Activated B cell treated with CpG ODN at 0.5 μM for 24 hours (primary cell): ENCODE measurements at regions of chr6 and their contacts with region 1.

Region 1: GRCh38 chr6:4775584-4776494 is at the start of gene CDYL:
- DNase-seq: peak; percentile 96
- ATAC-seq: peak; percentile 77
- H3K4me3 Mint-ChIP-seq: peak within 1 kb of the TSS; percentile 90
- H3K27ac Mint-ChIP-seq: peak within 1 kb of the TSS; percentile 85
- H3K4me1 Mint-ChIP-seq: peaks cover 46% of the 10 kb centered on the region
- H3K27me3 Mint-ChIP-seq: no peaks in the 10 kb centered on the region
- CTCF ChIP-seq: no peak
- total RNA-seq, gene CDYL: 47.5 and 49.8 TPM in 2 replicates

Region 2: GRCh38 chr6:3800850-3801591 is 974.8 kb before region 1 on chr6:
- CTCF ChIA-PET with region 1: no interaction called
- POLR2A ChIA-PET with region 1: no interaction called
- intact Hi-C with region 1: loop called (anchors 5 kb)
- DNase-seq: no peak
- ATAC-seq: no peak
- H3K4me3 Mint-ChIP-seq: no peak overlapping the region
- H3K27ac Mint-ChIP-seq: no peak overlapping the region
- H3K4me1 Mint-ChIP-seq: peaks cover 53% of the 10 kb centered on the region
- H3K27me3 Mint-ChIP-seq: no peaks in the 10 kb centered on the region
- CTCF ChIP-seq: no peak

Region 3: DNA sequence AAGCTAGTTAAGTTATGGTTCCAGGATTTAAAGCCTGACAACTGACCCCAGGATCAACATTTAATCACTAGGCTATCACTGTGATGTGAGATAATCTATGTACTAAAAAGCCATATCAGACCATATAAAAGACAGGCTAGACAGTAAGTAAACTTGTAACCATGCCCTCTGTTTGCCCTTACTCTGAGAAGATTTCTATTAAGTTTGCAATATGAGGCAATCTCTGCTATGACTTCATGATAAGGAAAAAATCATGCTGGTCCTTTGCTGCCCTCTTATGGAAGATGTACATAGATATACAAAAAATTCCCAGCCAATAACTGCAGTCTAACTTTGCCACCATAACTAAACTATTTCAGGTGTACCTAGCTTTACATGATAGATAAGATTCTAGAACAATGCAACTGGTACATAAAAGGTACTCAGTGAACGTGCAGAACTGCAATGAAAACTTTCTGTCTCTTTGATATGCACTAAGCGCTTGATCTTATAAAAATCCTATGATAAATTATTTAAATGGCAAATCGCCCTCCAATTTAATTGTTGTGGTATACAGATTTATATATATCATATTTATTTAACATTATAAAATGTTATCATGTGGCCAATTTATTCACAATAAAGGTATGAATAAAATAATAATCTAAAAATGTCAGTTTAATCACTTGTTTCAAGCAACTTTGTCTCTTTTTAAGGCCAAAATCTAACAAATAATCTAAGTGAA is 767.4 kb before region 1 on chr6:
- CTCF ChIA-PET with region 1: no interaction called
- POLR2A ChIA-PET with region 1: no interaction called
- intact Hi-C with region 1: no loop called
- DNase-seq: no peak
- ATAC-seq: peak; percentile 49
- H3K4me3 Mint-ChIP-seq: no peak overlapping the region
- H3K27ac Mint-ChIP-seq: no peak overlapping the region
- H3K4me1 Mint-ChIP-seq: peaks cover 25% of the 10 kb centered on the region
- H3K27me3 Mint-ChIP-seq: no peaks in the 10 kb centered on the region
- CTCF ChIP-seq: no peak

Region 4: GRCh38 chr6:4281341-4282293 is 494.2 kb before region 1 on chr6:
- CTCF ChIA-PET with region 1: no interaction called
- POLR2A ChIA-PET with region 1: interaction called, 7 read pairs
- intact Hi-C with region 1: loop called (anchors 1 kb)
- DNase-seq: peak; percentile 60
- ATAC-seq: peak; percentile 97
- H3K4me3 Mint-ChIP-seq: peak overlapping the region; percentile 73
- H3K27ac Mint-ChIP-seq: peak overlapping the region; percentile 76
- H3K4me1 Mint-ChIP-seq: peaks cover 18% of the 10 kb centered on the region
- H3K27me3 Mint-ChIP-seq: peaks cover 26% of the 10 kb centered on the region
- CTCF ChIP-seq: no peak

Region 5: GRCh38 chr6:4788953-4789584 is 13.2 kb after region 1 on chr6:
- CTCF ChIA-PET with region 1: interaction called, 4 read pairs
- POLR2A ChIA-PET with region 1: interaction called, 17 read pairs
- intact Hi-C with region 1: loop called (anchors 1 kb)
- DNase-seq: peak; percentile 50
- ATAC-seq: peak; percentile 99
- H3K4me3 Mint-ChIP-seq: peak overlapping the region; percentile 63
- H3K27ac Mint-ChIP-seq: peak overlapping the region; percentile 39
- H3K4me1 Mint-ChIP-seq: peaks cover 51% of the 10 kb centered on the region
- H3K27me3 Mint-ChIP-seq: no peaks in the 10 kb centered on the region
- CTCF ChIP-seq: no peak

Region 6: DNA sequence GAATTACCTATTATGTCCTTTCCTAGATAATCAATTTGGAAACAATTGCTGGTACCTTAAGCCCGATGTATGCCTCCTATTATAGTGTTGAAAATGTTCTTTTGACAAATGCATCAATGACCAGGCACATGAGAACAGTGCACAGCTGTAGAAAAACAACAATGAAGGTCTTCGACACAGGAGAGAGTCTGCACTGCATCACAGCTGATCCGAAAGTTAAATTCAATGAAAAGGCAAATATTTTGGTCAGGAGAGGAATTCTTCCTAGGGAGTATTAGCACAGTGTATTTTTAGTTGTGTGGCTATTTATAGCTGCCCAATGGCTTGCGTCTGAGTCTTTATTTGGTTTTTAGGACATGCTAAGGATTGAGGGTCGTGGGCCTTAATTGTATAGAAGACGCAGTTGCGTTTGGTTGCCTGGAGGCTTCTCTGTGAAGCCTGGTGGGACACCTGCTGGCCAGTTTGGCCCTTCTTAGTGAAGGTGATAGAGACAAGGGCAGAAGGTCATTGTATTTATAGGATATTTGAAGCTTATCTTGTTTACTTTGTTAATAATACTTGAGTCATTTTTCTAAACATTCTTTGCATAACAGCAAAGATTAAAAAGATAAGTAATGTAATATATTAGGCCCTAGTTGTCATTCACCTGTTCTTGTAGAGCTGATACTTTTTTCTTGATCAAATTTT is 72.7 kb after region 1 on chr6:
- CTCF ChIA-PET with region 1: no interaction called
- POLR2A ChIA-PET with region 1: interaction called, 7 read pairs
- intact Hi-C with region 1: loop called (anchors 10 kb)
- DNase-seq: no peak
- ATAC-seq: no peak
- H3K4me3 Mint-ChIP-seq: no peak overlapping the region
- H3K27ac Mint-ChIP-seq: no peak overlapping the region
- H3K4me1 Mint-ChIP-seq: peaks cover 43% of the 10 kb centered on the region
- H3K27me3 Mint-ChIP-seq: no peaks in the 10 kb centered on the region
- CTCF ChIP-seq: no peak

Region 7: GRCh38 chr6:5003604-5004372 is 227.9 kb after region 1 on chr6 and contains the start of gene RPP40:
- CTCF ChIA-PET with region 1: no interaction called
- POLR2A ChIA-PET with region 1: interaction called, 12 read pairs
- intact Hi-C with region 1: loop called (anchors 1 kb)
- DNase-seq: peak; percentile 98
- ATAC-seq: peak; percentile 94
- H3K4me3 Mint-ChIP-seq: peak within 1 kb of the TSS; percentile 94
- H3K27ac Mint-ChIP-seq: peak within 1 kb of the TSS; percentile 98
- H3K4me1 Mint-ChIP-seq: peaks cover 13% of the 10 kb centered on the region
- H3K27me3 Mint-ChIP-seq: no peaks in the 10 kb centered on the region
- CTCF ChIP-seq: no peak
- total RNA-seq, gene RPP40: 5.9 and 7.1 TPM in 2 replicates

Region 8: DNA sequence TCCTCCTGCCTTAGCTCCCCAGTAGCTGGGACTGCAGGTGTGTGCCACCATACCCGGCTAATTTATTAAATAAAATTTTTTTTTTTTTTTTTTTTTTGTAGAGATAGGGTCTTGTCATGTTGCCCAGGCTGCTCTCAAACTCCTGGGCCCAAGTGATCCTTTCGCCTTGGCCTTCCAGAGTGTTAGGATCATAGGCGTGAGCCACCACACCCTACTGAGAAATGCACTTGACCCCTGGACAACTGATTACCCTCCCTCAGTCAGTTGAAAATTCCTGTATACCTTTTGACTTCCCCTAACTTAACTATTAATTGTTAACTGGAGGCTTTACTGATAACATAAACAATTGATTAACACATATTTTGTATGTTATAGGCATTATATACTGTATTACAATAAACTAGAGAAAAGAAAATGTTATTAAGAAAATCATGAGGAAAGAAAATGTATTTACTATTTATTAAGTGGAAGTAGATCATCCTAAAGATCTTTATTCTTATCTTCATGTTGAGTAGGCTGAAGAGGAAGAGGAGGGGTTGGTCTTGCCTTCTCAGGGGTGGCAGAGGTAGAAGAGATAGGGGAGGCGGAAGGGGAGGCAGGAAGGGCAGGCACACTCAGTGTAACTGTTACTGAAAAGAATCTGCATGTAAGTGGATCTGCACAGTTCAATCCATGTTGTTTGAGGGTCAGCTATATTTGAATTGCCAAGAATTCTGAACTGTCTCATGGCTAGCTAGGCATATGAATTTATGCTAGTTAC is 589.8 kb after region 1 on chr6:
- CTCF ChIA-PET with region 1: no interaction called
- POLR2A ChIA-PET with region 1: no interaction called
- intact Hi-C with region 1: no loop called
- DNase-seq: no peak
- ATAC-seq: no peak
- H3K4me3 Mint-ChIP-seq: no peak overlapping the region
- H3K27ac Mint-ChIP-seq: no peak overlapping the region
- H3K4me1 Mint-ChIP-seq: no peaks in the 10 kb centered on the region
- H3K27me3 Mint-ChIP-seq: no peaks in the 10 kb centered on the region
- CTCF ChIP-seq: no peak

Region 9: GRCh38 chr6:6008648-6009421 is 1233.0 kb after region 1 on chr6:
- CTCF ChIA-PET with region 1: no interaction called
- POLR2A ChIA-PET with region 1: no interaction called
- intact Hi-C with region 1: loop called (anchors 10 kb)
- DNase-seq: peak; percentile 36
- ATAC-seq: peak; percentile 65
- H3K4me3 Mint-ChIP-seq: peak overlapping the region; percentile 78
- H3K27ac Mint-ChIP-seq: no peak overlapping the region
- H3K4me1 Mint-ChIP-seq: peaks cover 38% of the 10 kb centered on the region
- H3K27me3 Mint-ChIP-seq: peaks cover 57% of the 10 kb centered on the region
- CTCF ChIP-seq: no peak